Caco-2 (cell line): ENCODE measurements at regions of chr6 and their contacts with region 1.

Region 1: GRCh38 chr6:56021943-56022342 is 146.6 kb upstream of the BMP5 start:
- DNase-seq: peak in 1 of 2 experiments; percentile 22
- H3K4me3 ChIP-seq: no peak overlapping the region
- H3K4me3 Mint-ChIP-seq: no peak overlapping the region
- H3K27ac Mint-ChIP-seq: no peak overlapping the region
- H3K4me1 ChIP-seq: no peaks in the 10 kb centered on the region
- H3K4me1 Mint-ChIP-seq: no peaks in the 10 kb centered on the region
- H3K27me3 ChIP-seq: no peaks in the 10 kb centered on the region
- H3K27me3 Mint-ChIP-seq: peaks cover under 1% of the 10 kb centered on the region
- CTCF ChIP-seq: peak; percentile 27 to 32

Region 2: DNA sequence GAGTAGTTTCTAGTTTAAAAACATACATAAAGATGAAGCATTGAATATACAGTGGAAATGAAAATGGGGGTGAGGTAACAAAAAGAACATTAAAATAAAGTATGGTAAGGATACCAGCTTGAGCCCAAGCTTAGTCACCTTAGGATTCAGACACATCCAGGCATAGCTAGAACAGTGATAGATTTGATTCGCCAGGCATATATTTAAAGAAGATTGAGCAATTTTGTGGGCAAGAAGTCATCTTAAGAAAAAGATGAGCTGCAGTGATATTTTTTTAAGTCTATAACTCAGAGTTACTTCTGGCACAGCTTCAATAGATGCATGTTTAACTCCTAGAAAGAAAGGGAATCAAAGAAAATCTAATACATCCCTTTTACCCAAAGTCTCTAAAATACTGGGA is 244.5 kb before region 1 on chr6:
- CTCF ChIA-PET with region 1: no interaction called
- POLR2A ChIA-PET with region 1: no interaction called
- intact Hi-C with region 1: no loop called
- DNase-seq: no peak
- H3K4me3 ChIP-seq: no peak overlapping the region
- H3K4me3 Mint-ChIP-seq: no peak overlapping the region
- H3K27ac Mint-ChIP-seq: no peak overlapping the region
- H3K4me1 ChIP-seq: no peaks in the 10 kb centered on the region
- H3K4me1 Mint-ChIP-seq: peaks cover 5% of the 10 kb centered on the region
- H3K27me3 ChIP-seq: no peaks in the 10 kb centered on the region
- H3K27me3 Mint-ChIP-seq: peaks cover 2% of the 10 kb centered on the region
- CTCF ChIP-seq: no peak

Region 3: GRCh38 chr6:55980627-55981211 is 41.2 kb before region 1 on chr6:
- CTCF ChIA-PET with region 1: no interaction called
- POLR2A ChIA-PET with region 1: no interaction called
- intact Hi-C with region 1: loop called (anchors 2 kb)
- DNase-seq: peak in 1 of 2 experiments; percentile 59
- H3K4me3 ChIP-seq: no peak overlapping the region
- H3K4me3 Mint-ChIP-seq: no peak overlapping the region
- H3K27ac Mint-ChIP-seq: no peak overlapping the region
- H3K4me1 ChIP-seq: no peaks in the 10 kb centered on the region
- H3K4me1 Mint-ChIP-seq: no peaks in the 10 kb centered on the region
- H3K27me3 ChIP-seq: no peaks in the 10 kb centered on the region
- H3K27me3 Mint-ChIP-seq: peaks cover 10% of the 10 kb centered on the region
- CTCF ChIP-seq: peak; percentile 65 to 66

Region 4: DNA sequence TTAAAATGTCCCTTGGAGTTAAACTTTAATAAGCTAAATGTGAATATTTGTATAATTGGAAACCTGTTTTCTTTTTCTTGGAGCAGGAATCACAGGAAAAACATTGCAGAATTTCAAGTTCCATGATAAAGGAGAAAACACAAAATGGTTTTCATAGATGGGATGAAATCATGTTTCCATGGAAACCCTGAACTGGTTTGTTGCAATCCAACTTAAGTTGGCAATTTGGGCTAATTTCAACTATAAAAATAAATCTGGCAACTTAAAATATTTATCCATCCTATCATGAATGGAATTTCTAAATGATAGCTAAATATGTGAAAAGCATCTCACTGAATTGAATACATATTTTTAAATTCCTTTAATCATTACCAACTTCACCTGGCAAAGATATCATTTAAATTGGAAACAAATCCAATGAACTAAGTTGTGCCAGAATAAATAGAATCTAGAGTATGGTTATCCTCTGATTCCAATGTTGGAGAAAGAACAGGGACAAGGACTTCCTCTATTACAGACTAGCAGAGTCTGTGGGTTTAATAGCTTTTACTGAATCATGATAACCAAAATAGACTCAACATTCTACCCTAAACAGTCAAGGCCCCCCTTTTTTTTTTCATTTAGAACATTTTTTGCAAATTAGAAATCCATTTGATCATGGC is 192.2 kb after region 1 on chr6:
- CTCF ChIA-PET with region 1: no interaction called
- POLR2A ChIA-PET with region 1: no interaction called
- intact Hi-C with region 1: loop called (anchors 10 kb)
- DNase-seq: no peak
- H3K4me3 ChIP-seq: no peak overlapping the region
- H3K4me3 Mint-ChIP-seq: no peak overlapping the region
- H3K27ac Mint-ChIP-seq: no peak overlapping the region
- H3K4me1 ChIP-seq: no peaks in the 10 kb centered on the region
- H3K4me1 Mint-ChIP-seq: no peaks in the 10 kb centered on the region
- H3K27me3 ChIP-seq: no peaks in the 10 kb centered on the region
- H3K27me3 Mint-ChIP-seq: no peaks in the 10 kb centered on the region
- CTCF ChIP-seq: no peak

Region 5: DNA sequence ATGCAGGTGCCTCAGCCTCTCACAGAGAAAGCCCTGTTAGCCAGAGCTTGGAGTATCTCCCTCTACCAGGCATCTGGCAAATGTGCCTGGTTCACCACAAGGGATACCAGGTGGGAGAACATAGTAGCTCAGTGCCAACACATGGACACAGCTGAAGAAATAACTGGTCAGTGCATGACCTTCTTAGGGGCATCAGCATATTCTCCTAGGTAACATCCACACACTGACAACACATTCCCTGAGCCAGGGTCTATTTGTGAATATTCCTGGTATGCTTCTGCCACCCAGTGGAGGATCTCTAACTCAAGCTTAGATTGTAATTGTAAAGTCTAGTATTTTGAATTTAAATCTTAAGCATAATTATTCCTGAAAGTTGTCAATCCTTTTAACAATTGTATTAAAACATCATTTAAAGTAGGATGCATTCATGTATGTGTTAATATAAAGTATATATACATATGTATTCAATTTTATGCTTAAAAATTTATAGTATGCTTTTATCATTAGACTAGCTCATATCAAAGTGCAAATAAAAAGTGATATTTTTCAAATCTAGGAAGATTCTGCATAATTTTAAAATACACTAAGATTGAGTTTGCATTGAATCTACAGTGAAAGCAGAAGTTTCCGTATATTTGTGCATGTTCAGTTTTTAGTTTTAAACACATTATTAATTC is 270.7 kb after region 1 on chr6:
- CTCF ChIA-PET with region 1: no interaction called
- POLR2A ChIA-PET with region 1: no interaction called
- intact Hi-C with region 1: loop called (anchors 1 kb)
- DNase-seq: peak; percentile 46 to 56
- H3K4me3 ChIP-seq: no peak overlapping the region
- H3K4me3 Mint-ChIP-seq: no peak overlapping the region
- H3K27ac Mint-ChIP-seq: no peak overlapping the region
- H3K4me1 ChIP-seq: no peaks in the 10 kb centered on the region
- H3K4me1 Mint-ChIP-seq: peaks cover 3% of the 10 kb centered on the region
- H3K27me3 ChIP-seq: no peaks in the 10 kb centered on the region
- H3K27me3 Mint-ChIP-seq: no peaks in the 10 kb centered on the region
- CTCF ChIP-seq: peak; percentile 46 to 57

Region 6: DNA sequence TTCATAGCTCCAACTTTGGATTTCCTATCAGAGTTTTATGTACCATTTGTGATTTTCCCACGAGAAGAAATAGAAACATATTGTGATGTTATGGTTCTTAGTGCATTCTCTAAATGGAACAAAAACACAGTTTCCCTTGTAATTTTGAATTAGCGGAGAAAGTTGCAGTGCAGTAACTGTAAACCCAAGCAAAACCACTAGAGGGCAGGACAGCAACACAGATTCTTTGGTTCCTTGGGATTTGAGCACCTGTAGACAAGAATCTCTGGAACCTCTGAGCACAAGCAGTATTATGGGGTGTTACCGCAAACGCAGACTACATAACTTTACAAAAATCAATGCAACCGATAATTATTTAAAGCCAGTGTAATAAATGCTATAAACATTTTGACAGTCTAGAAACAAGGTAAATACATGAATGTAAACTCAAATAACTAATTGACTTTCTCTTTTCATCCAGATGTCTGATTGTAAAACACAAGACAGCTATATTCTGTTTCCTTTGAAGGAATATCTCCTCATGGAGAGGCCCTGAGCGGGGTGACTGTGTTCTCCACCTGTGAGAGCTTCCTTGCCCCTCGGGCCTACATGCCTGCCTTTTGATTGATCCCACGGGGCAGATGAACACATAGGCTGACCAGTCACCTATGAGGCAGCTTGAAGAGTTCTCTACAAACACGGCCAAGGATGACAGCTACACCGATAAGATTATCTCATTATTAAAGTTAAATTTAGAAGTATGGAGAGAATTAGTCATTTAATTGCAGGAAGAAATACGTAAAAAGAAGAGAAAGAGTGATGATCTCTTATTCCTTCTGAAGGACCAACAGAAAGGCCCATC is 293.0 kb after region 1 on chr6:
- CTCF ChIA-PET with region 1: no interaction called
- POLR2A ChIA-PET with region 1: no interaction called
- intact Hi-C with region 1: no loop called
- DNase-seq: peak; percentile 35 to 60
- H3K4me3 ChIP-seq: no peak overlapping the region
- H3K4me3 Mint-ChIP-seq: no peak overlapping the region
- H3K27ac Mint-ChIP-seq: no peak overlapping the region
- H3K4me1 ChIP-seq: no peaks in the 10 kb centered on the region
- H3K4me1 Mint-ChIP-seq: peaks cover 8% of the 10 kb centered on the region
- H3K27me3 ChIP-seq: no peaks in the 10 kb centered on the region
- H3K27me3 Mint-ChIP-seq: no peaks in the 10 kb centered on the region
- CTCF ChIP-seq: peak; percentile 72 to 76